HAP-1 (cell line): ENCODE measurements at regions of chr11 and their contacts with region 1.

Region 1: DNA sequence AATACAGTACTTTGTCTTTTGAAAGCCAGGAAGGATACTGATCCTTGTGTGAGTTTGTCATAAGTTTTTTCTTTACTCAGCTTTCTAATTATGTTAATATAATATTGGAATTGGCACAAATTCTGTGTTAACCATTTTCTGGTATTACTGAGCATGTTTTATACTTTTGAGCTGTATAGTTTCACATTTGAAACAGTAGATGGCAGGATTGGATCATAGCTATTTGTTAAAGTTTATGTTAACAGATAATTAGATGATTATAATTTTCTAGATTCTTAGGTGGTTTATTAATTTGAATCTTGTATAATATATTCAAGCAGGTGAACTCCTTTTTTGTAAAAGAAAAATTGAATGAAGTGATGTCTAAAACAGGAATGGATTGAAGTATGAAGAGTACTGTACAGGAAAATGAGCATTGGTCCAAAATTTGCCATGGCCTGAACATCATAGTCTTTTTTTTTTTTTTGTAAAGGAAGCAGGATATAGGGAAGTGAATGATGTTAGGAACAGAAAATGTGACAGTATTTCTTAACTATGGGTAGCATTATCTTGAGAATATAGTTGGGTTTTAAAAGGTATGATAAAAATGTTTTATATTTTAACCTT is 102.0 kb downstream of the CYP2R1 start:
- DNase-seq: no peak
- H3K4me3 ChIP-seq: no peak overlapping the region
- H3K4me1 ChIP-seq: no peaks in the 10 kb centered on the region
- H3K27me3 ChIP-seq: no peaks in the 10 kb centered on the region

Region 2: DNA sequence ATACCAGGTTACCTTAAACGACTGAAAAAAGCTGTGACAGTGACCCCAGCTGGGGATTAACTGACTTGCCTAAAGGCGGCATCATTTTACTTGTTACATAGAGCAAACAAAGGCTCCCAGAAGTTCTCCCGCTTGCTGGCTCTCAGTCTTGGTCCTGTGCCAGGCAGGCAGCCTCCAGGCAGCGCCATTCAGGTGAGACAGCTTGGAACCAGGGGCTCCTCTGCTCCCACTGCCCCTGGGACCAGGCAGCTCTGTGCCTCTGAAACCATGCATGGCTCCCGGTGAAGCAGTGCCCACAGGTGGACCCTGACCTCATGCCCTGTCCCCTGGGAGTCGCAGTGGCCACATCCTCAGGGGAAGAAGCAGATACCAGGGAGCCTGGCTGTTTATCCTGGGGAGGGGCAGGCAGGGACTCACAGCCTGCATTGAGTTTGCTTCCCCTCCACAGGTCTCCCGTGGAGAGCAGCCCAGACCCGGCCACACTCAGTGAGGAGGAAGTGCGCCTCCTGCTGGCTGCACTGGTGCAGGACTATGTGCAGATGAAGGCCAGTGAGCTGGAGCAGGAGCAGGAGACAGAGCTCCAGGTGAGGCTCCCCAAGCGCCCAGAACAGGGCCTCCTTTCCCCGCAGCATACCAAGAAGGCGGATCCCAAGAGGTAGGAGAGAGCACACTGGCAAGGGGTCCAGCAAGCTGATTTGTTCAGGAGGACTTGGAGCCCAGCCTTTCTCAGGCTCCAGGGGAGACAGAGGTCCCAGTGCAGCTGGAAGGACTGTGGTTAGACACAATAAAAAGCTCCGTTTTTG is 117.6 kb after region 1 on chr11:
- in situ Hi-C with region 1: loop called (anchors 10 kb)
- DNase-seq: peak; percentile 22 to 87
- H3K4me3 ChIP-seq: no peak overlapping the region
- H3K4me1 ChIP-seq: no peaks in the 10 kb centered on the region
- H3K27me3 ChIP-seq: peaks cover 6% of the 10 kb centered on the region; the same call in 1 of the 2 replicates